ENCODE measurements at regions of chr1 and their contacts with region 1.

Region 1: DNA sequence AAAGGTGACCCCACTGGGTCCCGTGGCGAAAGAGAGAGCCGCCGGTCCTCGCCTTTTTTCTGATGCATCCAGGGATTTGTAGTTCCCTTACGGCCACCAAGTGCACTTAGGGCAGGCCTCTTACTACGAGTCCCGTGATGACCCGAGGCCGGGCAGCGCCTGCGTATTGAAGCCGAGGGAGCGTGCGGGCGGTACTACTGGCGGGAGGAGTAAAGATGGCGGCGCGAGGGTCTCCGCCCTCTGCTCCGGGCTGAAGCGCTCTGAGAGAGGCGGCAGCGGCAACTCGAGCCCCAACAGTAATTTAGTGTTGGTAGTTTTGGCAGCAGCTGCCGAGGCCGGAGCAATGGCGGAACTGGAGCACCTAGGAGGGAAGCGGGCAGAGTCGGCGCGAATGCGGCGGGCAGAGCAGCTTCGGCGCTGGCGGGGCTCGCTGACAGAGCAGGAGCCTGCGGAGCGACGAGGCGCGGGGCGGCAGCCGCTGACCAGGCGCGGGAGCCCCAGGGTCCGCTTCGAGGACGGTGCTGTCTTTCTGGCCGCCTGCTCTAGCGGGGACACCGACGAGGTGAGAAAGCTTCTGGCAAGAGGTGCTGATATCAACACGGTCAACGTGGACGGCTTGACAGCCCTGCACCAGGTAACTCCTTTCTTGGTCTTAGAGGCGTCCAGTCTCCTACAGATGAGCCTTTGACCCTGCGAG is at the start of gene PPP1R12B:
- DNase-seq: peak; percentile 97 to 99 (median 98)
- ATAC-seq: peak; percentile 97 to 100 (median 98)
- H3K4me3 ChIP-seq: peak within 1 kb of the TSS; percentile 75 to 98 (median 90)
- H3K27ac ChIP-seq: peak within 1 kb of the TSS; percentile 80 to 98 (median 92)
- H3K4me1 ChIP-seq: peaks cover 0 to 30% (median 15%) of the 10 kb centered on the region in 12 donors
- H3K27me3 ChIP-seq: no peaks in the 10 kb centered on the region
- CTCF ChIP-seq: no peak
- POLR2A ChIP-seq: peak in 1 of 2 donors; percentile 74
- total RNA-seq, gene PPP1R12B: 368 to 972 (median 618) TPM

Region 2: GRCh38 chr1:202416641-202417040 is 68.0 kb after region 1 on chr1:
- intact Hi-C with region 1: loop called in 2 of 10 experiments (anchors 5 to 10 kb)
- DNase-seq: no peak
- ATAC-seq: no peak
- H3K4me3 ChIP-seq: no peak overlapping the region
- H3K27ac ChIP-seq: peak overlapping the region in 3 of 12 donors; percentile 1 to 50 (median 35)
- H3K4me1 ChIP-seq: peaks cover 0 to 49% (median 15%) of the 10 kb centered on the region in 12 donors
- H3K27me3 ChIP-seq: no peaks in the 10 kb centered on the region
- CTCF ChIP-seq: no peak
- POLR2A ChIP-seq: no peak

Region 3: DNA sequence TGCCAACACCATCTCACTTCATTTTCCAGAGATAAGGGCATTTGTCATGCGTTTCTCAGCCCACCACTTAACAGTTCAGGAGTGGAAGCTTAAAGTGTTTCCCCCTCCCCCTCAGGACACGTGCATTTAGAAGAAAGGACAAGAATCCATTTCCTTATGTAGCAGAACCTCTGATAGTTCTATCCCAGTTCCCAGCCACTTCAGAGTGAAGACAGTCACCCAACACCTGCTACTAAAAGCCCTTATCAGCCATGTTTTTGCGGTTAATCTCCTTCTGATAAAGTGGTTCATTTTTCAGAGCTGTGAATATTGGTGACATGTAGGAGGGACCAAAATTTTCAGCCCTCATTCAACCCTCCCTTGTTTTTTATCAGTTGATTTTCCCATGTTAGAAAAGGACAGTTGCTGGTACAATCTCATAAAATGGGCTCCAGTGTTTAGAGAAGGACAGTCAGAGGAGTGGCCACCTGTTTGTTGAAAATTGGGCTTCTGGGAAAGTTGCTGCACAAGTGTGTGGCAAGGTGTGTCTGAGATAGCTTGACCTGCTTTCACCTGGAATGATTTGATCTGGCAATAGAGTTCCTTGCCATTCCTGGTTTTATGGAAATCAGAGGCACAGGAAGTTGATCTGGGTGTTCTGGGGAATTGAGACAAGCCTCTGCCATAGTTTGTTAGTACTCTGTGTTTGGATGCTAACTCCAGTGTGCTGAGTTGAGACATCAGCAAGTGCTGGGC is 113.9 kb after region 1 on chr1:
- intact Hi-C with region 1: loop called in 7 of 10 experiments (anchors 5 to 10 kb)
- DNase-seq: peak in 2 of 5 donors; percentile 44 to 50
- ATAC-seq: peak; percentile 44 to 81 (median 68)
- H3K4me3 ChIP-seq: peak overlapping the region in 11 of 12 donors; percentile 18 to 65 (median 47)
- H3K27ac ChIP-seq: peak overlapping the region; percentile 47 to 97 (median 76)
- H3K4me1 ChIP-seq: peaks cover 0 to 46% (median 11%) of the 10 kb centered on the region in 12 donors
- H3K27me3 ChIP-seq: peaks cover 0 to 14% (median 0%) of the 10 kb centered on the region in 9 donors
- CTCF ChIP-seq: no peak
- POLR2A ChIP-seq: no peak

Region 4: GRCh38 chr1:202599677-202600431 is 251.2 kb after region 1 on chr1:
- intact Hi-C with region 1: loop called in 2 of 10 experiments (anchors 10 kb)
- DNase-seq: peak; percentile 50 to 73 (median 64)
- ATAC-seq: peak; percentile 67 to 88 (median 84)
- H3K4me3 ChIP-seq: no peak overlapping the region
- H3K27ac ChIP-seq: peak overlapping the region in 3 of 12 donors; percentile 22 to 27 (median 26)
- H3K4me1 ChIP-seq: peaks cover 0 to 8% (median 3%) of the 10 kb centered on the region in 12 donors
- H3K27me3 ChIP-seq: peaks cover 0 to 63% (median 0%) of the 10 kb centered on the region in 9 donors
- CTCF ChIP-seq: peak; percentile 54 to 81 (median 72)
- POLR2A ChIP-seq: no peak

Region 5: GRCh38 chr1:202710070-202711045 is 361.7 kb after region 1 on chr1 and contains the start of gene SYT2:
- intact Hi-C with region 1: loop called in 6 of 10 experiments (anchors 5 to 10 kb)
- DNase-seq: peak in 3 of 5 donors; percentile 27 to 70 (median 38)
- ATAC-seq: peak in 3 of 4 donors; percentile 33 to 54 (median 45)
- H3K4me3 ChIP-seq: peak within 1 kb of the TSS in 11 of 12 donors; percentile 22 to 48 (median 34)
- H3K27ac ChIP-seq: no peak within 1 kb of the TSS
- H3K4me1 ChIP-seq: peaks cover 0 to 19% (median 10%) of the 10 kb centered on the region in 12 donors
- H3K27me3 ChIP-seq: peaks cover 21 to 97% (median 30%) of the 10 kb centered on the region in 9 donors
- CTCF ChIP-seq: no peak
- POLR2A ChIP-seq: no peak
- total RNA-seq, gene SYT2: 0.03 to 0.09 (median 0.07) TPM in 4 of 9 donors, not detected in the others